ENCODE measurements at regions of chr2 and their contacts with region 1.

Region 1: GRCh38 chr2:143034292-143035074 is 94.7 kb upstream of the ARHGAP15 start:
- DNase-seq: peak; percentile 89
- H3K4me3 ChIP-seq: no peak overlapping the region
- H3K27ac ChIP-seq: no peak overlapping the region
- H3K4me1 ChIP-seq: no peaks in the 10 kb centered on the region
- H3K27me3 ChIP-seq: no peaks in the 10 kb centered on the region
- CTCF ChIP-seq: peak; percentile 99

Region 2: DNA sequence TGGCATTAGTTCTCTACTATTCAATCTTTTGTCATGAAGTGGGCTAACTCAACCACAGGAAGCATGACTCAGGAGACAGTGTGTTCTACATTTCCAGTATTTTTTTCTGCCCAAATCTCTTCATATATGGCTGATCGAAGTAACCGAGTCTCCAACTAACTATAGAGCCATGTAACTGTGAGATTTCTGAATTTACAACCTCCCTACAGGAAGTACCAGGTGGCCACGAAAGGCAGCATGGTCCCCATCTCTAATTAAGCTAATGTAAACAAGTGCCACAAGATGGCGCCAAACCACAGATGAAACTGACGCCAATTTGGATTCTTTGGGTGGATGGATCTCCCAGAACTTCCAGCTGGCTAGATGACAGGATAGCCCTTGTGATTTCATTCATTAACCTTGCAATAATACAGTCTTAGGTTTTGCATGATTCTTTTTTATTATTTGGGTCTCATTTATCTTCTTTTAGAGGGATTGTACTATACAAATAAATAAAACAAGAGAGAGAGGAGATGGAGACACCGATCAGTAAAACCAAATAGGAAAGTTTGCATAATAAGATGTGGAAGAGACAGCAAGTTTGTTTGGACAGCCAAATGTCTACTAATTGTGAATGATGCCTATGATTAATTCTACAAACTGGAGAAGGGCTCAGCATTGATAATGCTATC is 76.4 kb after region 1 on chr2:
- CTCF ChIA-PET with region 1: interaction called, 8 read pairs
- POLR2A ChIA-PET with region 1: no interaction called
- intact Hi-C with region 1: loop called (anchors 2 kb)
- DNase-seq: peak; percentile 88
- H3K4me3 ChIP-seq: no peak overlapping the region
- H3K27ac ChIP-seq: no peak overlapping the region
- H3K4me1 ChIP-seq: no peaks in the 10 kb centered on the region
- H3K27me3 ChIP-seq: no peaks in the 10 kb centered on the region
- CTCF ChIP-seq: peak; percentile 83

Region 3: DNA sequence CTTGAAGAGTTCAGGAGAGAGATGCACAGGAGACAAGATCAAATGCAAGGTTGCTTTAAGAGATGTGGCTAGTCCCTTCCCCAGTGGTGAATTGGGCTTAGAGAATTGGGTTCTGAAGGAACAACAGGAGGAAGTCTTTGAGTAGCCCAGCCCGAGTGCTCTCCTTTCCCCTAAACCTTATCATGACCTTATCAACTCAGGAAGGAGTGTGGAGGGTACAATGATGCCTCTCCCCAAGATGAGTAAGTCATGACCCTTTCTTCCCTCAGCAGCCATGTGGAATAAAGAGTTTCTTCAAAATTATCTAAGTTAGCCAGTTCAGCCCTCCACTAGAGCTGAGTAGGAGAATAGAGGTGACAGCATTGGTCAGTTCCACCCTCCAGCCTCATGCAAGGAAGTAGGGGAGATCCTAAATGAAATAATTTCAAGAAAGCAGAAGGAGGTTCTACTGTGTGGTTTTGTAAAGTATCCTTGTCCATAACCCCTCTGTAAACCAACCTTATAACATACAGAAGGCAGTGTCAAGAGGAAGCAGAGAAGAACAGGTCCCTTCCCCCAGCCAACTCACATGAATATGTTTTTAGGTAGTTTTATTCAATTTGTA is 183.1 kb after region 1 on chr2:
- CTCF ChIA-PET with region 1: interaction called, 7 read pairs
- POLR2A ChIA-PET with region 1: no interaction called
- intact Hi-C with region 1: loop called (anchors 1 kb)
- DNase-seq: no peak
- H3K4me3 ChIP-seq: no peak overlapping the region
- H3K27ac ChIP-seq: no peak overlapping the region
- H3K4me1 ChIP-seq: no peaks in the 10 kb centered on the region
- H3K27me3 ChIP-seq: no peaks in the 10 kb centered on the region
- CTCF ChIP-seq: no peak

Measured in A673 (cell line).